ENCODE measurements at regions of chr5 and their contacts with region 1.

Region 1: DNA sequence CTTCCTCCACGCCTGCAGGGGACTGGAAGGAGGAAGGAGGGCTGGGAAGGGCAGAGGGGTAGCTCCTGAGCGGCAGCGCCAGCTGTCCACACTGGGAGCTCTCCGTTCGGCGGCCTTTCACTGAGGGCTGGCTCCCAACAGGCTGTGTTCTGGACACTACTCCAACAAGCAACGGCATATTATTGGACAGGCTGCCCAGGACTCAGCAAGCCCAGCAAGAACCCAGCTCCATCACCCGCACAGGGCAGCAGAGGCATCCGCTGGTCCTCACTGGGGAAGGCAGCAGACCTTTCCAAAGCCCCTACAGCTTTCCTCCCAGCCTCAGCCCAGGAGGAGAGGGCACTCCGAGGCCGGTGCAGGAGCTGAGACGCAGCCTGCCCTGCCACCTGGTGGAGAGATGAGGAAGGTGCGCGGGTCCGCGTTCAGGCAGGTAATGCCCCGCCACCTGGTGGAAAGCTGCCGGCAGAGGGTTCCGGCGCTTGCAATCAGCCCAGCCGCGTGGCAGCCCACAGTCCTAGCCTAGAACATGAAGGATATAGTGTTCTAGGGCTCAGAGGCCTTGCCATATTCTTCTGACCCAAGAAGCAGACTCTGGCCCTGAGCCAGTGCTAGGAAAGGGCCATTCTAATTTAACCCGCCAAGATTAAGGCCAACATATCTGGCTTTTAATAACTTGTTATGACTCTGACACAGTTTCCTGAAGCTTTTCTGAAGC is 74.4 kb downstream of the NRG2 start:
- DNase-seq: peak; percentile 92
- ATAC-seq: peak; percentile 99
- H3K4me3 Mint-ChIP-seq: no peak overlapping the region
- H3K27ac Mint-ChIP-seq: no peak overlapping the region
- H3K4me1 Mint-ChIP-seq: no peaks in the 10 kb centered on the region
- H3K27me3 Mint-ChIP-seq: peaks cover 21% of the 10 kb centered on the region

Region 2: GRCh38 chr5:139765409-139766217 is 203.1 kb before region 1 on chr5:
- CTCF ChIA-PET with region 1: interaction called, 19 read pairs
- POLR2A ChIA-PET with region 1: no interaction called
- DNase-seq: peak; percentile 86
- ATAC-seq: peak; percentile 91
- H3K4me3 Mint-ChIP-seq: peak overlapping the region; percentile 71
- H3K27ac Mint-ChIP-seq: no peak overlapping the region
- H3K4me1 Mint-ChIP-seq: peaks cover 16% of the 10 kb centered on the region
- H3K27me3 Mint-ChIP-seq: peaks cover 28% of the 10 kb centered on the region

Region 3: DNA sequence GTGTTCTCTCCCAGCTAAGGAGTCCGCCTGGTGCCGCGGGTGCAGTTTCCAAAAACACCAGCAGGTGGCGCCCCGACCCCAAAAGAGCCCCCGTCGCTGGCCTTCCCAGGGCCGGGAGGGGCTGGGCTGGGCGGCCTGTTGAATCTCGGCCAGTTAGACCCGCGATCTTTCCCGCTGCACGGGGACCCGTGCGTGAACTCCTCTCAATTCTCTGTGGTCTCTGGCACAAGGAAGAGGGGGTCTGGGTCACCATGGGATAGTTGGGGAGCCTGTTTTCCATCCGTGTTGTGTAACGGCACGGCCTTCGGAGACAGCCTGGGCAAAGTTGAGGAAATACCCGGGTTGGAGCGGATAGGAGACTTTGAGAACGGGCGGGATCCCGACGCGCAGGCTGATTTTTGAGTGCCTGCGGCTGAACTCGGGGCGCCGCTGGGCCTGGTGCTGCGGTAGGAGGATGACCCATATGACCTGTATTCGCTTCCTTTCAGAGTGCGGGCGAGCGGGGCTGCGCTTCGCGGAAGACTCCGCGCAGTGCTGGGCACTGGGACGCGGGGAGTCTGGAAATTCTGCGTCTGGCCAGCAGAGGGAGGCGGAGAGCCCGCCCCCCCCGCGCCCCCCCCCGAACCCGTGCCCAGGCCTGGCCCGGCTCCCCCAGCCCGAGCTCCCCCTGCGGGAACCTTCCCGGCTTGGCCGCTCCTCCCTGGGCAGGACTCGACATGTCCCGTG is 181.0 kb before region 1 on chr5:
- CTCF ChIA-PET with region 1: interaction called, 191 read pairs
- POLR2A ChIA-PET with region 1: interaction called, 5 read pairs
- DNase-seq: peak; percentile 88
- ATAC-seq: peak; percentile 94
- H3K4me3 Mint-ChIP-seq: peak overlapping the region; percentile 76
- H3K27ac Mint-ChIP-seq: no peak overlapping the region
- H3K4me1 Mint-ChIP-seq: peaks cover 4% of the 10 kb centered on the region
- H3K27me3 Mint-ChIP-seq: peaks cover 19% of the 10 kb centered on the region

Region 4: DNA sequence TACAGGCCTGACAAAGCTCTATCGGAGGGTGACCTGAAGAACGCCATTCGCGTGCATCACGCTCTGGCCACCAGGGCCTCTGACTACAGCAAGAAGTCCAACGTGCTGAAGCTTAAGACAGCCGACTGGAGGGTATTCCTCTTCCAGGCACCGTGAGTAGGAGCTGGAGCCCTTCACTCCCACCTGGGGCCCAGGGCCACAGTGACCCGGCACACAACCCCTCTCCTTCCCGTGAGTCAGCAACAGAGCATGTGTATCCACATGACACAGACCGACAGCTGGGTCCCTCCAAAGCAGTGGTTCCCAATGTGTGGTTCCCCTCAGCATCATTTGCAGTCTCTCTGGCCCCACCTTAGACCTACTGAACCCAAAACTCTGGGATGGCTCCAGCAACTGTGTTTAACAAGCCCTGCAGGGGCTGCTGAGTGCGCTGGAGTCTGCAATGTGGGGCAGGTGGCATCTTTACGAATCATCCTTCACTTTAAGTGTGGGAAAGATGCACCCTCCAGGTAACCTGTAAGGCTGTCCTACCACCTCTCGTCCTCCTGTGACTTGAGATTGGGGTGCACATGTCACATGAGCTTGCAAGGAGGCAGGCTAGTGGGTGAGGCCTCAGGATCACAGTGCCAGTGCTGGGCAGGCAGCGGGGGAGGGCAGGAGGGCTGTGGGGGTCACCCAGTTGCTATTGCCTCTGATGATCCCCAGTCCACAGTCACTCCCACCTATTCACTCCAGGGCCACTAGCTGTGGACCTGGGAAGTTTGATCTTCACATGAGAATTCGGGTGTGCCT is 130.9 kb before region 1 on chr5:
- CTCF ChIA-PET with region 1: interaction called, 11 read pairs
- POLR2A ChIA-PET with region 1: no interaction called
- DNase-seq: no peak
- ATAC-seq: no peak
- H3K4me3 Mint-ChIP-seq: no peak overlapping the region
- H3K27ac Mint-ChIP-seq: no peak overlapping the region
- H3K4me1 Mint-ChIP-seq: no peaks in the 10 kb centered on the region
- H3K27me3 Mint-ChIP-seq: peaks cover 15% of the 10 kb centered on the region

Region 5: DNA sequence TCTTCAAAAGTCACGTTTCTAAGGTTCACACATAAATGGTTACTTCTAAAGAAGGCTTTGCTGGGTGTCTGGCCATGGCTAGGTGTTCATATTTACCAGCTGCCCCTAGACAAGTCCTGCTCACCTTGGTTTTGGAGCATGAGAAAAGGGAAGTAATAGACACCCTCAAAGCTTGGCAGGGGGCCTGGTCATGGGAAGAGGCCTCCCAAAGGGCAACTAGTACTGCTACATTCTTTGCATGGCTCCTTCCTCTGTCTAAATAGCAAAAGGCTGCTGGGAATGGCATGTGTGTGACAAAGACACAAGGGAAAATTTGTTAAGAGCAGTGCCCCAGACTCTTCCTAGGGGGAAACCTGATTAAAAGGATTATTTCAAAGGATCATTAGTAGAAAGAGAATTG is 19.0 kb before region 1 on chr5:
- CTCF ChIA-PET with region 1: interaction called, 54 read pairs
- POLR2A ChIA-PET with region 1: no interaction called
- DNase-seq: no peak
- ATAC-seq: no peak
- H3K4me3 Mint-ChIP-seq: no peak overlapping the region
- H3K27ac Mint-ChIP-seq: no peak overlapping the region
- H3K4me1 Mint-ChIP-seq: no peaks in the 10 kb centered on the region
- H3K27me3 Mint-ChIP-seq: peaks cover 24% of the 10 kb centered on the region

Region 6: DNA sequence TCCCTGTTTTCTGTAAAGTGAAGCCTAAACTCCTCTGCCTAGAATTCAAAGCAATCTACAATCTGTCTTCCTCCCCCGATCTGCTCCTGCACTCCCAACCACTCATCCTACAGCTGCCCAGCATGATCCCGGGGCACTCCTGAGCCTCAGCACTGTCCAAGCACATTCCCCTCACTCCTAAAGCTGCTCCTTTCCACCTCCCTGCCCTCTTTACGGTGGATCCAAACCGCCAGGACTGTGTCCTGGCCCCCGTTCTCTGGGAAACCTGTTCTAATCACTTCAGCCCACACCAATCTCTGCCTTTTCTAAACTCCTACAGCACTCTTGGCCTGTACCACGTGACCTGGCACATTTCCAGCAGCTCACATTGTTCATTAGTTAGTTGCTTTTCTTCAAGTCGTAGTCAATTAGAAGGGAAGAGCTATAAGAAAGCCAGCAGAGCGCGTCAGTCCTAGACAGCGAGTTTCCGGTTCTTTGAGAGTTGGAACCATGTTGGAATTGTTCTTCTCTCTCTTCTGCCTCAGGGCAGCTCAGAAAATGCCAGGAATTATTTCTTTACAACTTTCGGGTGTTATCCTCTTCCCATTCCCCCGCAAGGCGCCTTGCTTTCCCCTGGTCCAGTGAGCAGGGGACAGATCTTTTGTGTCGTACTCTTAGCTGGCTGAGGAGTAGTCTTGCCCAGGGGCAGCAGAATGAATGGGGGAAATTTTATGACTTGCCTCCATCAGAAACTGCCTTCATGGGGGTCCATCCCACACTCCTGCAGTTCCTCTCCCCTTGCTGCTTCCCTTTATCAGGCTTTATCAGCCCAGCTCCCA is 13.7 kb after region 1 on chr5:
- CTCF ChIA-PET with region 1: interaction called, 59 read pairs
- POLR2A ChIA-PET with region 1: no interaction called
- DNase-seq: no peak
- ATAC-seq: no peak
- H3K4me3 Mint-ChIP-seq: no peak overlapping the region
- H3K27ac Mint-ChIP-seq: no peak overlapping the region
- H3K4me1 Mint-ChIP-seq: no peaks in the 10 kb centered on the region
- H3K27me3 Mint-ChIP-seq: peaks cover 29% of the 10 kb centered on the region

Region 7: GRCh38 chr5:140408750-140409256 is 440.1 kb after region 1 on chr5:
- CTCF ChIA-PET with region 1: no interaction called
- POLR2A ChIA-PET with region 1: no interaction called
- DNase-seq: no peak
- ATAC-seq: no peak
- H3K4me3 Mint-ChIP-seq: no peak overlapping the region
- H3K27ac Mint-ChIP-seq: no peak overlapping the region
- H3K4me1 Mint-ChIP-seq: peaks cover 22% of the 10 kb centered on the region
- H3K27me3 Mint-ChIP-seq: no peaks in the 10 kb centered on the region

Measured in activated CD8-positive, alpha-beta T cell treated with anti-CD3 and anti-CD28 coated beads, Interleukin-2, amount 10 ng/mL, durations not matched to agents 7 days and 5 days (primary cell).